ENCODE measurements at regions of chr16 and their contacts with region 1.

Region 1: DNA sequence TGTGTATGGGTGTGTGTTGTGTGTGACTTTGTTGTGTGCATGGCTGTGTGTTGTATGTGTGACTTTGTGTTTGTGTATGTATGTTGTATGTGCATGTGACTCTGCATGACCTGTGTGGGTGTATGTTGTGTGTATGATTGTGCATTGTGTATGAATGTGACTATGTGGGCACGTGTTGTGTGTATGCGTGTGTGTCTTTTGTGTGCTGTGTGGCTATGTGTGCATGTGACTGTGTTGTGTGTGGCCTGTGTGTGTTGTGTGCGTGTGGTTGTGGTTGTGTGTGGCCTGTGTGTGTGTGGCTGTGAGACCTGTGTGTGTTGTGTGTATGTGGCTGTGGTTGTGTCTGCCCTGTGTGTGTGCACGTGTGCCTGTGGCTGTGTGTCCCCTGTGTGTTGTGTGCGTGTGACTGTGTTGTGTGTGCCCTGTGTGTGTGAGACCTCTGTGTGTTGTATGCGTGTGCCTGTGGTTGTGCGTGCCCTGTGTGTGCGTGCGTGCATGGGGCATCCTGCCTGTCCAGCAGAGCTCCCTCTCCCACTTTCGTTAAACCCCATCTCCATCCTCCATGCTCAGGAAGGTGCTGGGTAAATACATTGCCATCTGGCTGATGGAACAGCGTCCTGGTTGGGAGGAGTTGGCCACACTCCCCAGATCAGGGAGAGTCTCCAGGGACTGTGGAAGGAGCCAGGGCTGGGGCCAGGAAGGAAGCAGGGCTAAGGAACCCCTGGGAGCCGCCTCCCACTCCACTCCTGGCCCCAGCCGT is 90.1 kb upstream of the GSE1 start:
- DNase-seq: no peak
- H3K4me3 ChIP-seq: no peak overlapping the region
- H3K4me3 Mint-ChIP-seq: peak overlapping the region; percentile 33
- H3K27ac Mint-ChIP-seq: peak overlapping the region; percentile 89
- H3K4me1 ChIP-seq: peaks cover 82% of the 10 kb centered on the region
- H3K4me1 Mint-ChIP-seq: peaks cover 53% of the 10 kb centered on the region
- H3K27me3 ChIP-seq: no peaks in the 10 kb centered on the region
- H3K27me3 Mint-ChIP-seq: no peaks in the 10 kb centered on the region
- CTCF ChIP-seq: no peak

Region 2: GRCh38 chr16:85437166-85438055 is 85.6 kb before region 1 on chr16:
- CTCF ChIA-PET with region 1: interaction called, 5 read pairs
- POLR2A ChIA-PET with region 1: no interaction called
- intact Hi-C with region 1: loop called (anchors 2 kb)
- DNase-seq: peak; percentile 89 to 93
- H3K4me3 ChIP-seq: peak overlapping the region; percentile 29
- H3K4me3 Mint-ChIP-seq: peak overlapping the region; percentile 76
- H3K27ac Mint-ChIP-seq: peak overlapping the region; percentile 92
- H3K4me1 ChIP-seq: peaks cover 43% of the 10 kb centered on the region
- H3K4me1 Mint-ChIP-seq: peaks cover 17% of the 10 kb centered on the region
- H3K27me3 ChIP-seq: no peaks in the 10 kb centered on the region
- H3K27me3 Mint-ChIP-seq: no peaks in the 10 kb centered on the region
- CTCF ChIP-seq: no peak